HepG2 (cell line): ENCODE measurements at regions of chr9 and their contacts with region 1.

Region 1: GRCh38 chr9:68762570-68762969 is 57.5 kb downstream of the PIP5K1B start:
- DNase-seq: no peak
- ATAC-seq: no peak
- H3K4me3 ChIP-seq: no peak overlapping the region
- H3K27ac ChIP-seq: no peak overlapping the region
- H3K4me1 ChIP-seq: peaks cover 22% of the 10 kb centered on the region
- H3K27me3 ChIP-seq: no peaks in the 10 kb centered on the region
- CTCF ChIP-seq: no peak
- EP300 ChIP-seq: no peak
- POLR2A ChIP-seq: no peak
- RAD21 ChIP-seq: no peak

Region 2: DNA sequence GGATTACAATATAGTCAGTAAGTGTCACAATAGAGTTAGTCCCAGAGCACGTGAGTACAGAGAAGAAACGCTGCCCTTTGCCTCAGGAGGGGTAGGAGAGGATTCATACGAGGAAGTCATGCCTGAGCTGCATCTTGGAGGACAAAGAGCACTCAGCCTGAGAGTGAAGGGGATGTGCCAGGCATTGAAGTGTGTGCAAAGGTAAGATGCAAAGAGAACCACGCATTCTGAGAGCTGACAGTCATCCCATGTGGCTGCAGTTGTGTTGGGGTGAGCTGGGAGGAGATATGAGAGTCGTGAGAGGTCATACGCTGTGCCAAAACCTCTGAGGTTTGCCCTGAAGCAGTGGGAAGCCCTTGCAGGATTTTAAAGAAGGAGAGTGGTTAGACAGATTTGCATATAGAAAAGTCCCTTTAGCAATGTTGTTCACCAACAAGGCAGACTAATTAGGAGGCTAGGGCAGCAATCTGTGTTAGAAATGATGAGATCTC is 40.0 kb after region 1 on chr9:
- CTCF ChIA-PET with region 1: no interaction called
- POLR2A ChIA-PET with region 1: no interaction called
- in situ Hi-C with region 1: no loop called
- intact Hi-C with region 1: no loop called
- DNase-seq: no peak
- ATAC-seq: no peak
- H3K4me3 ChIP-seq: no peak overlapping the region
- H3K27ac ChIP-seq: no peak overlapping the region
- H3K4me1 ChIP-seq: no peaks in the 10 kb centered on the region
- H3K27me3 ChIP-seq: no peaks in the 10 kb centered on the region
- CTCF ChIP-seq: no peak
- EP300 ChIP-seq: no peak
- POLR2A ChIP-seq: no peak
- RAD21 ChIP-seq: no peak

Region 3: GRCh38 chr9:68822596-68823165 is 60.1 kb after region 1 on chr9:
- CTCF ChIA-PET with region 1: no interaction called
- POLR2A ChIA-PET with region 1: no interaction called
- in situ Hi-C with region 1: loop called (anchors 10 kb)
- intact Hi-C with region 1: no loop called
- DNase-seq: no peak
- ATAC-seq: no peak
- H3K4me3 ChIP-seq: no peak overlapping the region
- H3K27ac ChIP-seq: no peak overlapping the region
- H3K4me1 ChIP-seq: peaks cover 6% of the 10 kb centered on the region
- H3K27me3 ChIP-seq: no peaks in the 10 kb centered on the region
- CTCF ChIP-seq: no peak
- EP300 ChIP-seq: no peak
- POLR2A ChIP-seq: no peak
- RAD21 ChIP-seq: no peak

Region 4: GRCh38 chr9:69097064-69097463 is 334.5 kb after region 1 on chr9:
- CTCF ChIA-PET with region 1: no interaction called
- POLR2A ChIA-PET with region 1: no interaction called
- in situ Hi-C with region 1: no loop called
- intact Hi-C with region 1: no loop called
- DNase-seq: no peak
- ATAC-seq: no peak
- H3K4me3 ChIP-seq: no peak overlapping the region
- H3K27ac ChIP-seq: no peak overlapping the region
- H3K4me1 ChIP-seq: peaks cover 25% of the 10 kb centered on the region
- H3K27me3 ChIP-seq: no peaks in the 10 kb centered on the region
- CTCF ChIP-seq: no peak
- EP300 ChIP-seq: no peak
- POLR2A ChIP-seq: no peak
- RAD21 ChIP-seq: no peak